ENCODE measurements at regions of chr1 and their contacts with region 1.

Region 1: GRCh38 chr1:202750758-202751157 is 40.5 kb upstream of the SYT2 start:
- DNase-seq: no peak
- CTCF ChIP-seq: no peak

Region 2: DNA sequence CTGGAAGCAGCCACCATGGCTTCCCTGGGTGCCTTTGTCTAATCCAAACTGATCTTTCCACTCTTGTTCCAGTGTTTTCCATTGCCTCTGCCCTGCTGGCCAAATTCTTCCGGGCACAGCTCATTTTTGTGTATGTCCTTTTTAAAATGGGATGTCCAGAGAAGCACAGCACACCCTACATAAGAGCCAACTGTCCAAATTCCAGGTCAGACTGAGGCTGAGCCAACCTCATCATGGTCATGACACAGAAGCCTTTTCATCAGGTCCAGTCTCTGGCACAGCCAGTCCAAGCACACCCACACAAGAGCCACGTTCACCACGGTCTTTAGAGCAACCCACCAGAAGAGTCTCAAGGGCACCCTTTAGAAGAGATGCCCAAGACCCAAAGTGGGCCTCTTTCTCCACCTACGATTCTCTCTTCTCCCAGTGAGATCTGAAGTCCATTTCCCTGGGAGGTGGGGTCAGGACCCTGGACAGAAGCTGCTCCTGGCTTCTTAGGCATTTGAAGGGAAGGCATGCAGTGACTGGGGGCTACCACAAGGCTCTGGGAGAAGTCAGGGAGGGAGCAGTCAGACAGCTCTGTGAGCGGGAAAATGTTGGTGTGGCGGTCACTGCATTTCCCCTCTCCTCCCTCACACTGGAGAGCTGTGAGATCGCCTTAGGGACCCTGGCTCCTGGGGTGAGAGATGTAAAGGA is 93.7 kb before region 1 on chr1:
- in situ Hi-C with region 1: no loop called
- DNase-seq: no peak
- CTCF ChIP-seq: no peak

Region 3: GRCh38 chr1:202692959-202693555 is 57.7 kb before region 1 on chr1:
- in situ Hi-C with region 1: no loop called
- DNase-seq: peak; percentile 77
- CTCF ChIP-seq: no peak

Region 4: DNA sequence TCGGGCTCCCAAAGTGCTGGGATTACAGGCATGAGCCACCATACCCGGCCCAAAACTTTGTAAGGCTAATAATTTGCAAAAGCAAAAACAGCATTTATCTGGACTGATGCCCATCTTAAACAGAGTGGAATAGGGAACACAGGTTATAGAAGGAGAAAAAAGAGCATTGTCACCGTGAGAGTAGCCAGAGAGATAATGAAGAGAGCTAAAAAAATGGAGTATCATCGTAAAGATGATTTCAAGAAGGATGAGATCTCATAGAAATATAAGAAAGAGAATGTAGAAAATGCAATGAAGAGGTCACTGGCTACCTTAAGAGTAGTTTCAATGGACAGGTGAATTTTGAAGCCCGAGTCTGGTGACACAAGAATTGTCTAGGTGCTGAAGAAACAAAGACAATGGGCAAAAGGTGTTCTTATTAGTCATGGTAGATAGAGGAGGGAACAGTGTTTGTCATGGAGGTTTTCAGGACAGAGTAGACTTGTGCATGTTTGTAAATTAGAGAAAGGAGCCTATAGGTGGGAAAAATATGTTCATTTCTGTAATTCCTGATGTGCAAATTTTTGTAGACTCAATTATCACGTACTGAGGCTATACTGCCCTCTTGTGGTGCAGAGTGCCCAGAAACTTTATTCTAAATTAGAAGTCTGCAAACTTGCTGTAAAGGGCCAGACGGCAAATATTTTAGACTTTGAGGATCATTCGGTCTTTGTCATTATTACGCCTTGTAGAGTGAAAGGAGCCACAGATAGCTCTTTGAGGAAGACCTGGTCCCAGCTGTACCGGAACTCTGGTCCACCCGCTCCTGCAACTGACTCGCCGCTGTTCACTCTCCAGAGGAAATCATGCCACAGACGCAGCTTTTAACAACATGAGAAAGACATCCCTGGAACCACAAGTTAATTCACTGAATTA is 248.3 kb after region 1 on chr1:
- in situ Hi-C with region 1: loop called (anchors 25 kb)
- DNase-seq: peak; percentile 61
- CTCF ChIP-seq: peak; percentile 60